H1 (cell line): ENCODE measurements at regions of chr20 and their contacts with region 1.

Region 1: DNA sequence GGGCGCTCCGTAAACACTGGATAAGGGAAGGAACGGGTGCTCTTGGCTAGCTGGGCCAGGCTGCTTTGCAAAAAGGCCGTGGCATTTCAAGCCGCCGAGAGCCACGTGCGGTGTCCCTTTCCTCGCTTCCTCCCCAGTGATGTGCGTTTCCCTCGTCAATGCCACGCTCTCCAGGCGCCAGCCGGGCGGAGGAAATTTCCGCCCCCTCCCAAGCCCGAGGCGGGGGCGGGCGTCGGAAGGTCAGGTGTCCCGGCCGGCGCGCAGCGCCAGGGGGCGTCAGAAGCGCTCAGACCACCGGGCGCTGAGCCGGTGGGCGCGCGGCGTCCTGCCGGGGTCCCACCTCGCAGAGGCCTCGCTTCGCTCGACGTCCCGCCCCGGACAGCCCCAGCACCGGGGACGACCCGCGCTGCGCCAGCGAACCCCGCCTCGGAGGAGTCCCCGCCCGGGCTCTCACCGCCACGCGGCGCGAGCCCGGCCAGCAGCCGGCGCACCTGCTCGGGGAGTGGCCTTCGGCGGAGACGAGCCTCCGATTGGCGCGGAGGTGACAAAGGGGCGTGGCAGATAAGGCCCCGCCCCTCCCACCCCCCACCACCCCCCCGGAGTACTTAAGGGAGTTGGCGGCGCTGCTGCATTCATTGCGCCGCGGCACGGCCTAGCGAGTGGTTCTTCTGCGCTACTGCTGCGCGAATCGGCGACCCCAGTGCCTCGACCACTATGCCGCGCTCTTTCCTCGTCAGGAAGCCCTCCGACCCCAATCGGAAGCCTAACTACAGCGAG is at the start of gene SNAI1:
- DNase-seq: peak in 1 of 2 experiments; percentile 87
- H3K4me3 ChIP-seq: peak within 1 kb of the TSS; percentile 60 to 93 (median 73)
- H3K27ac ChIP-seq: 0 out of 2 replicates have a peak within 1 kb of the TSS, but pooled peaks have one; percentile 31
- H3K4me1 ChIP-seq: peaks cover 9 to 46% (median 34%) of the 10 kb centered on the region in 4 experiments
- H3K27me3 ChIP-seq: peaks cover 0 to 17% (median 15%) of the 10 kb centered on the region in 4 experiments; a peak in 6 of 7 replicates
- CTCF ChIP-seq: peak; percentile 31 to 54 (median 39)
- EP300 ChIP-seq: no peak
- POLR2A ChIP-seq: peak; percentile 98
- RAD21 ChIP-seq: peak; percentile 26 to 40; a peak in 3 of 4 replicates
- total RNA-seq, gene SNAI1: 6.5 and 7.7 TPM in 2 replicates

Region 2: DNA sequence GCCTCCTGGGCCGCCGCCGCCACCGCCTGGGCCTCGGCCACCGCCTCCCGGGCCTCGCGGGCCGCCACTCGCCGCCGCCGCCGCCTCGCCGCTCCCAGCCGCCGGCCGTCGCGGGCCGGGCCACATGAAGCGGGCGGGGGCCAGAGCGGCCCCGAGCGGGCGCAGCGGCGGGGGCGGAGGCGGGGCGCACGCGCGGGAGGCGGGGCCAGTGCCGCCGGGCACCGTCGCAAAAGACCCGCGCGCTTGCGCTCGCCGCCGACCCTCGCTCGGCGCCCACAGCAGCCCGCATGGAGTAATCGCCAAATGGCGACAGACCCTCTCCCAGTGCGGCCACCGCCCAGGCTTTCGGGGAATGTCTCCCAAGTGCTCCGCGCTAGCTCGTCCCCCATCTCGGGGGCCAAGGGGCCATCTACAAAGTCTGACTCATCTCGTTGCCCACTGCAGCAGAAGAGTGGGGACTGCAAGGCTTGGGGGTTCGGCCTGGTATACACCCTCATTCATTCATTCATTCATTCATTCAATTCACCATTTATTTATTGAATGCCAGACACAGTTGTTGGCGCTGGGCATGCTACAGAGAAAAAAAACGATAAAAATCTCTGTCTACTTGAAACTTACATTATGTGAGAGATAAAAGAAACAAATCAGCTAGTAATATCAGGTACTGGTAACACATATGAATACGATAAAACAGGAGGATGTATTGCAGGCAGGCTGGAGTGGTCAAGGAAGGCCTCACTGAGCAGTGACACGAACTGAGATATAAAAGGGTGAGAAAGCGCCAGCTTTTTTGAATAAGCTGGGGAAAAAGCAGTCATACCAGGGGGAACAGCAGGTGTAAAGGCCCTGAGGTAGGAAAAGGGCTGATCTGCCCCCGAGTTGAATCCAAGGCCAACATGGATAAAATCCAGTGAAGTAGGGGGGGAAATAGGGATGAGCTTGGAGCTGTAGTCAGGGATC is 268.5 kb before region 1 on chr20 and contains the start of gene B4GALT5:
- CTCF ChIA-PET with region 1: no interaction called
- POLR2A ChIA-PET with region 1: no interaction called
- DNase-seq: peak; percentile 82 to 88
- H3K4me3 ChIP-seq: peak within 1 kb of the TSS; percentile 77 to 96 (median 81)
- H3K27ac ChIP-seq: peak within 1 kb of the TSS; percentile 66
- H3K4me1 ChIP-seq: peaks cover 3 to 6% (median 5%) of the 10 kb centered on the region in 4 experiments; a peak in 6 of 7 replicates
- H3K27me3 ChIP-seq: no peaks in the 10 kb centered on the region
- CTCF ChIP-seq: no peak
- EP300 ChIP-seq: peak in 1 of 2 experiments; percentile 53; a peak in 1 of 3 replicates
- POLR2A ChIP-seq: no peak
- RAD21 ChIP-seq: peak; percentile 17 to 32; a peak in 2 of 4 replicates
- total RNA-seq, gene B4GALT5: 73.5 and 75.4 TPM in 2 replicates

Region 3: GRCh38 chr20:49999329-49999728 is 16.8 kb after region 1 on chr20:
- CTCF ChIA-PET with region 1: interaction called, 10 read pairs
- POLR2A ChIA-PET with region 1: interaction called, 183 read pairs
- DNase-seq: no peak
- H3K4me3 ChIP-seq: no peak overlapping the region
- H3K27ac ChIP-seq: no peak overlapping the region
- H3K4me1 ChIP-seq: no peaks in the 10 kb centered on the region
- H3K27me3 ChIP-seq: no peaks in the 10 kb centered on the region
- CTCF ChIP-seq: no peak
- EP300 ChIP-seq: no peak
- POLR2A ChIP-seq: no peak
- RAD21 ChIP-seq: no peak

Region 4: DNA sequence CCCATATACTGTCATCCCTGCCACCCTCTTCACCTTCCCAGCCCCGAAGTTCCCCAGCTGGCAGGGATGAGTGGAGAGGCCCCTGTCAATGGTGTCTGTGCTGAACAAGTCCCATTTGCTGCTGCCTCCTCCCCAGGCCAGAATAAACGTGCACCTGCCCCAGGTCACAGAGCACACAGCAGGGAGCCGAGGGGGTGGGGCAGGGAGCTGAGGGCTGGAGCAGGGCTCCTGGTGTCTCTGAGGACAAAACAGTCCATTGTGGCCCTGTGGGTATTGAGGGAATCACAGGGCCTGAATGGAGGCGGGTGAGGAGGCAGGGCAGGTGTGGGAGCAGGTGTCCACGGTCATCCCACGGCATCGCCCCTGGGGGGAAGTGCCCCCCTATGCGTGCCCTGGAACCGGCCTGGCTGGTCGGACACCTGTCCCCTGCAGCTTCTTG is 56.1 kb after region 1 on chr20:
- CTCF ChIA-PET with region 1: interaction called, 8 read pairs
- POLR2A ChIA-PET with region 1: interaction called, 15 read pairs
- DNase-seq: no peak
- H3K4me3 ChIP-seq: no peak overlapping the region
- H3K27ac ChIP-seq: no peak overlapping the region
- H3K4me1 ChIP-seq: peaks cover 0 to 14% (median 5%) of the 10 kb centered on the region in 4 experiments; a peak in 4 of 7 replicates
- H3K27me3 ChIP-seq: no peaks in the 10 kb centered on the region
- CTCF ChIP-seq: no peak
- EP300 ChIP-seq: no peak
- POLR2A ChIP-seq: no peak
- RAD21 ChIP-seq: no peak

Region 5: DNA sequence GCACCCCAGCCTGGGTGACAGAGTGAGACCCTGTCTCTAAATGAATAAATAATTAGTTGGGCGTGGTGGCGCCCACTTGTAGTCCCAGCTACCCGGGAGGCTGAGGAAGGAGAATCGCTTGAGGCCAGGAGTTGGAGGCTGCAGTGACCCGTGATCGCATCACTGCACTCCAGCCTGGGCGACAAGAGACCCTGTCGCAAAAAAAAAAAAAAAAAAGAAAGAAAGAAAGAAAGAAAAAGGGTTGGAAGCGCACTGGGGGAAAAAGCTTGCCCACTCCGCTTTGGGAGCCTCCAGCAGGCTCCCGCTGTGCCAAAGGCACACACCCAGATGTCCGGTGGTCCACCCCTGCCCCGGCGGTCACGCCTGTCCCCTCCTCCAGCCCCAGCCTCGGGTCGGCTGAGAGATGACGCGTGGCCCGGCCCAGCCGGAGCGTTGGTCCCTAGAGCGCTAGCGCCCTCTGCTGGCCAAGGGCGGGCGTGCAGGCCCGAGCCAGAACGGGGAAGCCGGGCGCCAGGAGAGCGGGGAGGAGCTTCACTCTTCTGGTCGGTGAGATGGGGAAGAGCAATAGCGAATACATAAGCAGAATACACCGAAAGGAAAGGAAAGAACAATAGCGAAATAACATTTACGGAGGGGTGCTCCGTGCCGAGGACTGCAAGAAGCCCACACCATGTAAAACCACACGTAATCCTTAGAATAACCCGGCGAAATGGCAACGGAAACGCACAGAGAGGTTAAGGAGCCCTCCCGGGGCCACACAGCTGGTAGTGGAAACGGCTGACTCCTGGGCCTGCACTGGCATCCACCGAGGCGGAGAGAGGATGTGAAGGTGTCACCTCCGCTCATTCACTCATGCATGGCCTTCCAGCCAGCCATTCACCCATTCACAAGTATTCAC is 88.7 kb after region 1 on chr20:
- CTCF ChIA-PET with region 1: interaction called, 514 read pairs
- POLR2A ChIA-PET with region 1: interaction called, 287 read pairs
- DNase-seq: peak; percentile 43 to 100
- H3K4me3 ChIP-seq: peak overlapping the region in 2 of 4 experiments; percentile 23 to 43; a peak in 5 of 8 replicates
- H3K27ac ChIP-seq: no peak overlapping the region
- H3K4me1 ChIP-seq: peaks cover 0 to 2% (median under 1%) of the 10 kb centered on the region in 4 experiments; a peak in 3 of 7 replicates
- H3K27me3 ChIP-seq: no peaks in the 10 kb centered on the region
- CTCF ChIP-seq: peak; percentile 97 to 98 (median 97)
- EP300 ChIP-seq: no peak
- POLR2A ChIP-seq: no peak
- RAD21 ChIP-seq: peak; percentile 99 to 100

Region 6: DNA sequence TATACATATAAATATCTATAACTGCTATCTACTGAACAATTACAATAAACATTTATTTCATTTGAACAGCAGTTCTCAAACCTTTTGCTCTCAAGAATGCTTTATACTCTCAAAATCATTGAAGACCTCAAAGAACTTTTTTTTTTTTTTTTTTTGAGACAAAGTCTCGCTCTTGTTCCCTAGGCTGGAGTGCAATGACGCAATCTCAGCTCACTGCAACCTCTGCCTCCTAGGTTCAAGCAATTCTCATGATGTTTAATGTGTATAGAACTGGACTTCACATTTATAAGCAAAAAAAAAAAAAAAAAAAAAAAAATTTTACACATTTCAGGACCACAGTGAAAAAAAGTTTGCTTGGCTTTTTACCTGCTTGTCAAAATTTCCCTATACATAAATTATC is 118.7 kb after region 1 on chr20:
- CTCF ChIA-PET with region 1: interaction called, 19 read pairs
- POLR2A ChIA-PET with region 1: interaction called, 3 read pairs
- DNase-seq: no peak
- H3K4me3 ChIP-seq: no peak overlapping the region
- H3K27ac ChIP-seq: no peak overlapping the region
- H3K4me1 ChIP-seq: peaks cover 0 to 11% (median 8%) of the 10 kb centered on the region in 4 experiments; a peak in 5 of 7 replicates
- H3K27me3 ChIP-seq: no peaks in the 10 kb centered on the region
- CTCF ChIP-seq: no peak
- EP300 ChIP-seq: no peak
- POLR2A ChIP-seq: no peak
- RAD21 ChIP-seq: no peak